MCF 10A (cell line): ENCODE measurements at regions of chr5 and their contacts with region 1.

Region 1: DNA sequence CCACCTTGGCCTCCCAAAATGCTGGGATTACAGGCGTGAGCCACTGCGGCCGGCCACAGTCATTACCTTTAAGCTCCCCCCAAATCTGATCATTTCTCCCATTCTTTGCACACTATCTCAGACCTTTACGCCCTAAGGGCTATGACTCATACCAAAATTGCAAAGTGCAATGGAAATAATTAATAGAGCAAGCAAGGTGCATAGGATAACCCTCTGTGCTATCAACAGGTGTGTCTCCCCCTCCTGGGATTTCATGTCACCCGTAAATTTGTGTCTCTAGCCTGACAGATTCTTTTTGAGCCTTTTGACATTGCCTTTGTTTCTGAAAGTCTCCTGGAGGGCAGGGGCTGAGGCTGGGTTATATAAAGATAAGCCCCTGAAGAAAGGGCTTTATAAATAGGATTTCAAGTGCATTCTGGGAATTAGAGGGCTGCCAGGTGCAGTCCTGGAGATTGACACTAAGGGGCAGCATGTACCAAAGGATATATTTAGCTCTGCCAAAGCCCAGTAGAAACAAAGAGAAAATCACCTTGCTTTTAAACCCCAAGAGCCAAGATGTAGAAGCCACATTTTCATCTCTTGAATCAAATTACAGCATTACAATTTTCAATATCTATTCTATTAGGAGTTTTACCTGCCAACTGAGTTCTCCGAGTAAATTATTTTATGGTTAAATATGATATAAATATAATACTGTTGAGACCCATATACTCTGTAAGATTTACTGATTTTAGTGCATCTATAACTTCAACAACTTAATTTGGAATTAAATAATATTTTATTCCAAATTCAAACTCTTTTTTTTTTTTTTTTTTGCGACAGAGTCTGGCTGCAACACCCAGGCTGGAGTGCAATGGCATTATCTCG is 18.2 kb downstream of the S100Z start:
- DNase-seq: peak; percentile 74
- H3K4me3 Mint-ChIP-seq: no peak overlapping the region
- H3K27ac Mint-ChIP-seq: no peak overlapping the region
- H3K4me1 Mint-ChIP-seq: no peaks in the 10 kb centered on the region
- H3K27me3 Mint-ChIP-seq: no peaks in the 10 kb centered on the region
- CTCF ChIP-seq: peak; percentile 87

Region 2: GRCh38 chr5:76601470-76601869 is 266.6 kb before region 1 on chr5:
- CTCF ChIA-PET with region 1: interaction called, 3 read pairs
- POLR2A ChIA-PET with region 1: no interaction called
- intact Hi-C with region 1: loop called (anchors 10 kb)
- DNase-seq: peak; percentile 83
- H3K4me3 Mint-ChIP-seq: no peak overlapping the region
- H3K27ac Mint-ChIP-seq: no peak overlapping the region
- H3K4me1 Mint-ChIP-seq: peaks cover 25% of the 10 kb centered on the region
- H3K27me3 Mint-ChIP-seq: no peaks in the 10 kb centered on the region
- CTCF ChIP-seq: peak; percentile 63

Region 3: DNA sequence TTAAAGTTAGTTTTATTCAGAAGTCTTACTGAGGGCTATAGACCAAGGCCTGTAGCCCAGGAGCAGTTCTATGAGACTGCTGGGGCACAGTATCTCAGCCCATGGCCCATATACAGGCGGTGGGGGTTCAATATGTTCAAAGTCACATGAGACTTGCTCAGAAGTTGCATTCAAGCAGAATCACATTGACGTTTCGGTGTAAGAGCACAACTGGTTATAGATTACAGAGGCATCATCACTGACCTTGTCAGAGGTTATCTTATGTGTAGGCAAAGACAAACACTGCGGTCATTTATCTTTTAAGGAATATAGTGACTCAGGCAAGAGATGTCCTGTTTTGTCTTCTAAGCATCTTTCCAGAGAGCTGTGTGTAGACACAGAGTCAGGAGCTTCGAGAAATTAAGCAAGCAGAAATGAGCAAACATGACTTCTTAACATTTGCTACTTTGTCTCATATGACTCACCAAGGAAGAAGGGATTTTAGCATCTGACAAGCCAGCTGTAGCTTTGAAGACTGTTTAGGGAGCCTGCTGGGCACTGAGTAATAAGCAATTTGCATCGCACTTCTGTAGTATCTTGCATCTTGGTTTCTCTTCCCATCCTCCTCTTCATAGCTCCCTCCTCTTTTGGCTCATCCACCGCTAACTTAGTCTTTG is 62.1 kb before region 1 on chr5:
- CTCF ChIA-PET with region 1: no interaction called
- POLR2A ChIA-PET with region 1: no interaction called
- intact Hi-C with region 1: no loop called
- DNase-seq: peak; percentile 90
- H3K4me3 Mint-ChIP-seq: no peak overlapping the region
- H3K27ac Mint-ChIP-seq: peak overlapping the region; percentile 69
- H3K4me1 Mint-ChIP-seq: peaks cover 25% of the 10 kb centered on the region
- H3K27me3 Mint-ChIP-seq: no peaks in the 10 kb centered on the region
- CTCF ChIP-seq: no peak

Region 4: GRCh38 chr5:76855961-76856360 is 12.1 kb before region 1 on chr5:
- CTCF ChIA-PET with region 1: interaction called, 12 read pairs
- POLR2A ChIA-PET with region 1: no interaction called
- intact Hi-C with region 1: no loop called
- DNase-seq: no peak
- H3K4me3 Mint-ChIP-seq: no peak overlapping the region
- H3K27ac Mint-ChIP-seq: no peak overlapping the region
- H3K4me1 Mint-ChIP-seq: no peaks in the 10 kb centered on the region
- H3K27me3 Mint-ChIP-seq: no peaks in the 10 kb centered on the region
- CTCF ChIP-seq: no peak

Region 5: GRCh38 chr5:77015938-77016569 is 148.0 kb after region 1 on chr5:
- CTCF ChIA-PET with region 1: interaction called, 81 read pairs
- POLR2A ChIA-PET with region 1: interaction called, 15 read pairs
- intact Hi-C with region 1: loop called (anchors 1 kb)
- DNase-seq: peak; percentile 49
- H3K4me3 Mint-ChIP-seq: no peak overlapping the region
- H3K27ac Mint-ChIP-seq: no peak overlapping the region
- H3K4me1 Mint-ChIP-seq: no peaks in the 10 kb centered on the region
- H3K27me3 Mint-ChIP-seq: no peaks in the 10 kb centered on the region
- CTCF ChIP-seq: peak; percentile 40

Region 6: GRCh38 chr5:78300464-78301045 is 1432.5 kb after region 1 on chr5:
- CTCF ChIA-PET with region 1: interaction called, 3 read pairs
- POLR2A ChIA-PET with region 1: no interaction called
- intact Hi-C with region 1: loop called (anchors 5 kb)
- DNase-seq: peak; percentile 38
- H3K4me3 Mint-ChIP-seq: no peak overlapping the region
- H3K27ac Mint-ChIP-seq: no peak overlapping the region
- H3K4me1 Mint-ChIP-seq: peaks cover 5% of the 10 kb centered on the region
- H3K27me3 Mint-ChIP-seq: no peaks in the 10 kb centered on the region
- CTCF ChIP-seq: peak; percentile 31